ENCODE measurements at regions of chr1 and their contacts with region 1.

Region 1: DNA sequence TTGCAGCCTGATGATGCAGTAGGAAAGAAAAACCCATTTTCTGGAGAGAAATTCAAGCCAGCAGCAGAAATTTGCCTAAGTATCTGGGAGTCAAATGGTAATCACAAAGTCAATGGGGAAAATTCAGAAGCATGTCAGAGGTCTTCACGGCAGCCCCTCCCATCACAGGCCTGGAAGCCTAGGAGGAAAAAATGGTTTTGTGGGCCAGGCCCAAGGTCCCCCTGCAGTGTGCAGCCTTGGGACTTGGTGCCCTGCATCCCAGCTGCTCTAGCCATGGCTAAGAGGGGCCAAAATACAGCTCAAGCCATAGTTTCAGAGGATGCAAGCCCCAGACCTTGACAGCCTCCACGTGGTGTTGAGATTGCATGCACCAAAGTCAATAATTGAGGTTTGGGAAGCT is 334.8 kb downstream of the PTBP2 start:
- DNase-seq: no peak
- ATAC-seq: no peak
- H3K4me3 ChIP-seq: no peak overlapping the region
- H3K27ac ChIP-seq: no peak overlapping the region
- H3K4me1 ChIP-seq: no peaks in the 10 kb centered on the region
- H3K27me3 ChIP-seq: no peaks in the 10 kb centered on the region
- CTCF ChIP-seq: no peak
- POLR2A ChIP-seq: no peak

Region 2: GRCh38 chr1:97070376-97070775 is 14.0 kb after region 1 on chr1:
- in situ Hi-C with region 1: no loop called
- intact Hi-C with region 1: loop called (anchors 2 kb)
- DNase-seq: no peak
- ATAC-seq: no peak
- H3K4me3 ChIP-seq: no peak overlapping the region
- H3K27ac ChIP-seq: no peak overlapping the region
- H3K4me1 ChIP-seq: no peaks in the 10 kb centered on the region
- H3K27me3 ChIP-seq: no peaks in the 10 kb centered on the region
- CTCF ChIP-seq: no peak
- POLR2A ChIP-seq: no peak

Region 3: DNA sequence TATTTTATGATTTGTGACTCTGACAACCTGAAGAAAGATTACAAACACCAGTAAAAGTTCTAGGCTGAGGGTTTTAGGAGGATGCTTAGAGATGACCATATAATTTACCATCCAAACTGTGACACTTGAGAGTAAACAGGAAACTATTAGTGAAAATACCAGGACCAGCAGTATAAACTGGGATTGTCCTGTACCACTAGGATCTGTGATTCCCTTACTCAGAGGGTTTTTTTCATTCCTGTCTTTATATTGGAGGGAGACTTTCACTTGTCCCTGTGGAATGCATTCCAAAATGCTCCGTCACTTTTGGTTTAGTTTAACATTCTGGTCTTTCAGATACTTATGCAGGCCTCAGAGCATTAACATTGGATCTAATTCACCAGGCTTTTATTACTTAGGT is 148.1 kb after region 1 on chr1:
- in situ Hi-C with region 1: no loop called
- intact Hi-C with region 1: no loop called
- DNase-seq: no peak
- ATAC-seq: no peak
- H3K4me3 ChIP-seq: no peak overlapping the region
- H3K27ac ChIP-seq: no peak overlapping the region
- H3K4me1 ChIP-seq: no peaks in the 10 kb centered on the region
- H3K27me3 ChIP-seq: no peaks in the 10 kb centered on the region
- CTCF ChIP-seq: no peak
- POLR2A ChIP-seq: no peak